Calu3 (cell line): ENCODE measurements at regions of chr14 and their contacts with region 1.

Region 1: GRCh38 chr14:63493246-63493645 is 49.9 kb downstream of the PPP2R5E start:
- DNase-seq: no peak
- H3K4me3 Mint-ChIP-seq: no peak overlapping the region
- H3K27ac Mint-ChIP-seq: no peak overlapping the region
- H3K4me1 Mint-ChIP-seq: peaks cover 13% of the 10 kb centered on the region
- H3K27me3 Mint-ChIP-seq: no peaks in the 10 kb centered on the region
- CTCF ChIP-seq: no peak

Region 2: GRCh38 chr14:61884711-61885110 is 1608.5 kb before region 1 on chr14:
- CTCF ChIA-PET with region 1: interaction called, 10 read pairs
- intact Hi-C with region 1: no loop called
- DNase-seq: no peak
- H3K4me3 Mint-ChIP-seq: no peak overlapping the region
- H3K27ac Mint-ChIP-seq: no peak overlapping the region
- H3K4me1 Mint-ChIP-seq: peaks cover 8% of the 10 kb centered on the region
- H3K27me3 Mint-ChIP-seq: peaks cover 30% of the 10 kb centered on the region
- CTCF ChIP-seq: no peak

Region 3: GRCh38 chr14:63478437-63478852 is 14.8 kb before region 1 on chr14:
- CTCF ChIA-PET with region 1: no interaction called
- intact Hi-C with region 1: no loop called
- DNase-seq: no peak
- H3K4me3 Mint-ChIP-seq: no peak overlapping the region
- H3K27ac Mint-ChIP-seq: no peak overlapping the region
- H3K4me1 Mint-ChIP-seq: peaks cover 30% of the 10 kb centered on the region
- H3K27me3 Mint-ChIP-seq: no peaks in the 10 kb centered on the region
- CTCF ChIP-seq: no peak

Region 4: DNA sequence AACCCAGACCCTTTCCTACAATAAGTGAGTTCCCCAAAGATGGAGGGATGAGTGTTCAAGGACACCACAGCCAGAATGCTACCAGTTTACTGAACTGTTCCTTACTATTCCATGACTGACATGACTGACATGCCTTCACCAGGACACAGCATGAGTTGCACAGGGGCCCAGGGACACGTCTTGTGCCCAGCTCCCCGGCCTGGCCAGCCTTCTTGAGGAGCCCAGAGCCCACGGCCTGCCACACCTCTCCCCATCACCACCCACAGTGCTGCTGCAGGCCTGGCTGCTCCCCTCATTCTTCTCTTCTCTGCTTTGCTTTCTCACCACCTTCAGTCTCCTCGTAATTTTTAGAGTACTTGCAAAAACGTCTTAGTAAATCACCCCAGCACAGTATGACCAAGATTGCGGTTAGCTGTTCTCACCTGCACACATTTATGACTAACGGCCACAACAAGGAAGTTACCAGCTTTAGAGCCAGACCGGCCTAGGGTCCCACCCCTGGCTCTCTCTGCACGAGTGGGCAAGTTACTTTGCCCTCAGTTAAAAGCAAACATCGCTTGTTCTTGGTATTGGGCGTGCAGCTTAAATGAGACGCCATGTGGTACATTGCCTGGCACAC is 31.4 kb after region 1 on chr14:
- CTCF ChIA-PET with region 1: interaction called, 11 read pairs
- intact Hi-C with region 1: no loop called
- DNase-seq: peak; percentile 66
- H3K4me3 Mint-ChIP-seq: peak overlapping the region; percentile 40
- H3K27ac Mint-ChIP-seq: peak overlapping the region; percentile 27
- H3K4me1 Mint-ChIP-seq: peaks cover 28% of the 10 kb centered on the region
- H3K27me3 Mint-ChIP-seq: no peaks in the 10 kb centered on the region
- CTCF ChIP-seq: no peak

Region 5: DNA sequence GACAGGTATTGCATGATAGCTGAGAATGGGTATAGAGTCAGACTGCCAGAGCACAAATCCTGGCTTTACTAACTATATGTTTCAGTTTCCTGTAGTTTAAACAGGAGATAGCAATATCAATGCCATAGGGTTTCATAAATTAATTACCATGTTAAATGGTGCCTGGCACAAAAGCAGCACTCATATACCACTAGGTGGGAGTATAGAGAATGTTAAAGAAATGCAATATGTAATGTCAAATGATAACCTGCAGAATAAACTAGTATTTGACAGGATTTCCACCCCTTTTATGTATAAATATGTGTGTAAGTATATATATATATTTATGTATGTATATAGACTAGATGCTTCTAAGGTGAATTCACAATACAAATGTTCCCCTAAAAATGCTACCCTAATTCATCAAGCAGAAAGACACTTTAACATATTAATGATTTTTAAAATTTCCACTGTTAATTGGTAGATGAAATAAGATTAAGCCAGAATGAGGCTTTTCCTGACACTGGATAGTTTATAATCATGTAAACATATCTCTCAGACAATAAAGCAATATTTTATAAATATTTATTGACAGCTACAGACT is 139.8 kb after region 1 on chr14:
- CTCF ChIA-PET with region 1: no interaction called
- intact Hi-C with region 1: no loop called
- DNase-seq: no peak
- H3K4me3 Mint-ChIP-seq: no peak overlapping the region
- H3K27ac Mint-ChIP-seq: no peak overlapping the region
- H3K4me1 Mint-ChIP-seq: no peaks in the 10 kb centered on the region
- H3K27me3 Mint-ChIP-seq: no peaks in the 10 kb centered on the region
- CTCF ChIP-seq: peak; percentile 24